CD4-positive, alpha-beta memory T cell (primary cell): ENCODE measurements at regions of chr19 and their contacts with region 1.

Region 1: DNA sequence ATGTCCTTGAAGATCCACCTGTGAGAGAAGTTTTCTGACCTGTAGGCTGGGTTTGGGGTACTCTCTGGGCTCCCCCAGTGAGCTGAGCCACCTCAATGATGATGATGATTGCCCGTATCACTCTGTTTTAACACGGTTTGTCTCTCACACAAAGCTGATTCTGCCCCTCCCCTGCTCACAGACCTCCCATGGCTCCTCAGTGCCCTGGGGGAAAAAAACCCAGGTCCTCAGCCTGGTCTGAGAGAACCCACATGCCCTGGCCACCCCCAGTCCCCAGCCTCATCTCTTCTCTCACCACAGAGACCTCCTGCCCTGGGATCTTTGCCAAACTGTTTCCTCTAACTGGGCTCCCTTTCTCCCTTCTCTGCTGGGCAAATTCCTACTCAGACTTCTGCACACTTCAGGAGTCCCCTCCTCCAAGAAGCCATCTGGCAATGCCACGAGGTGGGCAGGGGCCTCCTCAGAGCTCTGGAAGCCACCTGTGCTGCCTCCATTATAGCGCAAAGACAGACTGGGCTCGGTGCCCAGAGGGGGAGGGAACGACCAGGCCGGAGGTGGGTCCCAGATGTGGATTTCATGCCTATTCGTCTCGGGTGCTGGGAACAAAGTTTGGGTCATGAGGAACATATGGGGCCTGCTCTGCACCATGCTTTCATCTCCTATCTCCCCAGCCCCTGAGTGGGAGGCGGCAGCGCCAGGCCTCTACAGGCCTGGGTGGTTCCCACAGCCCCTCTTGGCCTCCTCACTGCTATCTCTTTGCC is 8.5 kb upstream of the CA11 start:
- DNase-seq: no peak
- H3K4me3 ChIP-seq: no peak overlapping the region
- H3K4me3 Mint-ChIP-seq: no peak overlapping the region
- H3K27ac ChIP-seq: no peak overlapping the region
- H3K27ac Mint-ChIP-seq: peak overlapping the region in 1 of 7 donors; percentile 70
- H3K4me1 ChIP-seq: peaks cover 4% of the 10 kb centered on the region
- H3K4me1 Mint-ChIP-seq: peaks cover 2 to 9% (median 4%) of the 10 kb centered on the region in 4 donors
- H3K27me3 ChIP-seq: no peaks in the 10 kb centered on the region
- H3K27me3 Mint-ChIP-seq: no peaks in the 10 kb centered on the region

Region 2: DNA sequence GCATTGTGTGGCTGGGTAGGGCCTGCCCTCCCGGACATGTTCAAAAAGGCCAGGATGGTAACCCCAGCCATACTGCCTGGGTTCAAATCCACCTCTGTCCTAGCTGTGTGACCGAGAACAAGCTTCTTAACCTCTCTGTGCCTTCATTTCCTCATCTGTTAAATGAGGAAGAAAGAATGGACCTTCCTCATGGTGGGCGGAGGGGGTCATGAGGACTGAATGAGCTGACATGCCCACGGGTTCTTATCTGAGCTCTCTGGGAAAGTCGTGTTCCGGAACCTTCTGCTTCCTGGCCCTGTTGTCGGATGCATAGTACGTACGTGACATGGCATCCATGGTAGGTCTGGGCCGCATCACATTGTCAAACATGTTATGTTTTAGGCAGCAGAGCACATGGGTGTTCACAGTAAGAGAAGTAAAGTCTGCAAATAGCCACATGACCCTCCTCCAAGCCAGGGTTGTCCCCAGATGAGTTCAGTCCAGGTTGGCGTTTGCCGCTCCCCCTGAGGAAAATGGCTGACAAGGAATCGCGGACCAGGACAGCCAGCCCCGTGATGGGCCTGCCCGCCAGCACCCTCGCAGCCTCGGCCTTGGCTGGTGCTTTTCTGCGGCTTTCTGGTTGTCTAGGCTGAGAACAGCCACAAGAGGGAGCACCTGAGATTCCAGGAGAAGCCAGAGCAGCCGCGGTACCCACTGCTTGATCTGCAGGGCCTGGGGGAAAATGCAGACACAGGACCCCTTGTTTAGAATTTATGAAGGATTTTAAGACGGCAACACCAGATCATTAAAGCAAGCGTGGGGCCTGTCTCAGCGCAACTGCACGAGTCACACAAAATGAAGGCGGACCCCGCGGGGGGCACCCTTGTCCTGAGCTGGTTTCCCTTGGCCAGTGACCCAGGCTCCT is 20.7 kb after region 1 on chr19:
- CTCF ChIA-PET with region 1: interaction called, 13 read pairs
- POLR2A ChIA-PET with region 1: no interaction called
- intact Hi-C with region 1: no loop called
- DNase-seq: peak; percentile 72 to 80 (median 75)
- H3K4me3 ChIP-seq: no peak overlapping the region
- H3K4me3 Mint-ChIP-seq: peak overlapping the region in 1 of 8 donors; percentile 2
- H3K27ac ChIP-seq: no peak overlapping the region
- H3K27ac Mint-ChIP-seq: peak overlapping the region in 3 of 7 donors; percentile 23 to 86 (median 64)
- H3K4me1 ChIP-seq: peaks cover 9% of the 10 kb centered on the region
- H3K4me1 Mint-ChIP-seq: peaks cover 5 to 8% (median 6%) of the 10 kb centered on the region in 4 donors
- H3K27me3 ChIP-seq: no peaks in the 10 kb centered on the region
- H3K27me3 Mint-ChIP-seq: no peaks in the 10 kb centered on the region

Region 3: DNA sequence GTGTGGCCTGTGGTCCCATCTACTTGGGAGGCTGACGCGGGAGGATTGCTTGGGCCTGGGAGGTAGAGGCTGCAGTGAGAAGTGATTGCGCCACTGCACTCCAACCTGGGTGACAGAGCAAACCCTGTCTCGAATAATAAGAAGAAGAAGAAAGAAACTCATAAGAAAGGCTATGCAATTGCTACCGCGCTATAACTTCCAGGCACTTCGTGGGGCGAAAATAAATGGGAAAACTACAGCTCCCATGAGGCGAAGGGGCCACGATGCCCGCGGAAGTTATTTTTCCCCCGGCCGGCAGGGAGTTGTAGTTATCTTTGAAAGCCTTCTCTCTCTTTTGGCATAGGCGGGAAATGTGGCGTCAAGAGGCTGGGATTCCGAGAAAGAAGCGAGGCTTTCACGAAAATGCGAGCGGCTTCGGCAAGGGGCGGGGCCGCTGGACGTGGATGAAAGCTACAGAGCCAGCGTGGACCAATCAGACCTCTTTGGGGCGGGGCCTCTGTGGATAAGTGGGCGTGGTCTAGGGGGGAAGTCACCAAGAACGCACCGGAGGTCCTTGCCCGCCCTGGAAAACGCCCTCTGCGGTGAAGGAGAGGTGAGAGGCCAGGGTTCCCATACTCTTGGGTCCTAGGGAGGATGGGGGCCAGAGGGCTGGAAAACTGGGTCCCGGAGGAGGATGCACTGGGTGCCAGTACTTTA is 245.4 kb after region 1 on chr19 and contains the start of gene NUCB1:
- CTCF ChIA-PET with region 1: no interaction called
- POLR2A ChIA-PET with region 1: no interaction called
- intact Hi-C with region 1: no loop called
- DNase-seq: peak; percentile 97 to 99 (median 97)
- H3K4me3 ChIP-seq: peak within 1 kb of the TSS; percentile 73 to 85
- H3K4me3 Mint-ChIP-seq: peak within 1 kb of the TSS; percentile 92 to 99 (median 98)
- H3K27ac ChIP-seq: peak within 1 kb of the TSS; percentile 81
- H3K27ac Mint-ChIP-seq: peak within 1 kb of the TSS; percentile 88 to 97 (median 95)
- H3K4me1 ChIP-seq: peaks cover 30% of the 10 kb centered on the region
- H3K4me1 Mint-ChIP-seq: peaks cover 18 to 49% (median 29%) of the 10 kb centered on the region in 4 donors
- H3K27me3 ChIP-seq: peaks cover 4% of the 10 kb centered on the region
- H3K27me3 Mint-ChIP-seq: peaks cover under 1 to 2% of the 10 kb centered on the region in 2 donors
- total RNA-seq, gene NUCB1: 132 to 145 TPM